ENCODE measurements at regions of chr2 and their contacts with region 1.

Region 1: DNA sequence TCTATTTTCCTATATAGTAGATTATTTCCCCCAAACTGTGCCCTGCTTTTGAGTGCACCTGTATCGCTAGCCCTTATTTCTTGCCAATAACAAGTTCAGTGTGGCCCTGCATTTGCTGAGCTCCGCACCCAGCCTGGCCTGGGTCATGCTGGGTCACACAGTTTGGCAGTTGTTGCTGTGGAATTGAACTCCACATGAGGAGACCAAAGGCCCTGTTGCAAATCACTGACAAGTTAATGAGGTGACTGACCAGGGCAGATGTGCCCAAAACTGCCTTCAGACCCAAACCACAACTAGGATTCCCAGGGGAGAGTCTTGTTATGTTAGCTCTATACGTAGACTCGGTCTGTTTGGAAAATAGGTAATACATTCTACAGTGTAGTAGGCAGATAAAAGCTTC is 31.0 kb downstream of the COL4A4 start:
- DNase-seq: no peak
- H3K4me3 ChIP-seq: no peak overlapping the region
- H3K27ac ChIP-seq: no peak overlapping the region
- H3K4me1 ChIP-seq: no peaks in the 10 kb centered on the region
- H3K27me3 ChIP-seq: no peaks in the 10 kb centered on the region
- CTCF ChIP-seq: no peak
- EP300 ChIP-seq: no peak
- POLR2A ChIP-seq: no peak

Region 2: DNA sequence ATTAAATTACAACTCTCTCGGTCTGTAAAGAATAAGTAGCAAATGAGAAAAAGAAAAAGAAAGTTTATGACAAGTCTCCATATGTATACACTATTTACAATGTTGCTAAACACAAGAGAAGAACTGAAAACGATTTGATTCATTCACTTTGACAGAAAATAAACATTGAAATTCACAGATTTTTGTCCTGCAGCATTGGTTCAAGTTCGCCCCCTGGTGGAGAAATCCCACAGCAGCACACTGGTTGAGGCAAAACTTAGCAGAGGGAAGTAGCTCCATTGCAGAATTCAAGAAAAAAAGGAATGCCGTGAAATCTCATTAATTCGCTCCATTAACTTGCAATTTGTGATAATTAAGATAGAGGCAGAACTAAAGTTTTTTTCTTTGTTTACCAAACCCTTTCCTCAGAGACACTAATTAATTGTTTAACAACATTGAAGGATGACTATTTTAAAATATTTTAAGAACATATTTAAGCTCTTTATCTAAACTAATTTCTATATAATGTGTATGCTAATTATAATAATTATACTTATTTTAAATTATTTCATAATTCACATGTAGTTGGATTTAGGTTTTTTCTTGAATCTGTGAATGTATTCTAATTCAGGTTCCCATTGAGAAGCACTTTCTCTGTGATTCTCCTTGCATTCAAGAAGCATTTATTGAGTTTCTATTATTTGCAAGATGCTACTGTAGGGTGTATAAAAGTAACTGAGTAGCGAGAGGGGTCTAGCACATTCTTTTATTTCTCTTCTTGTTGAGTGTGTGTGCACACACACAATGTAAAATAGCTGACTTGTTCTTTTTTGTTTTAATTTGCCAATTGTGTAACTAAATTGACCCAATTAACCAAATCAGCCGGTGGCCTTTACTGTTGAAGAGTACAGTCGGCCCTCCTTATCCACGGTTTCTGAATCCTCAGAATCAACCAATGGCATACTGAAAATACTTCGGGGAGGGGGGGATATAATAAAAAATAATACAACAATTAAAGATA is 105.6 kb after region 1 on chr2:
- in situ Hi-C with region 1: loop called (anchors 5 to 10 kb)
- intact Hi-C with region 1: loop called (anchors 2 kb)
- DNase-seq: peak; percentile 71
- H3K4me3 ChIP-seq: no peak overlapping the region
- H3K27ac ChIP-seq: no peak overlapping the region
- H3K4me1 ChIP-seq: no peaks in the 10 kb centered on the region
- H3K27me3 ChIP-seq: no peaks in the 10 kb centered on the region
- CTCF ChIP-seq: peak; percentile 84 to 94 (median 92)
- EP300 ChIP-seq: no peak
- POLR2A ChIP-seq: no peak

Region 3: GRCh38 chr2:227248876-227249275 is 115.9 kb after region 1 on chr2:
- in situ Hi-C with region 1: loop called in 2 of 4 experiments (anchors 5 to 10 kb)
- intact Hi-C with region 1: no loop called
- DNase-seq: no peak
- H3K4me3 ChIP-seq: no peak overlapping the region
- H3K27ac ChIP-seq: no peak overlapping the region
- H3K4me1 ChIP-seq: no peaks in the 10 kb centered on the region
- H3K27me3 ChIP-seq: no peaks in the 10 kb centered on the region
- CTCF ChIP-seq: no peak
- EP300 ChIP-seq: no peak
- POLR2A ChIP-seq: no peak

Measured in transverse colon (tissue), 4 donors.